Keratinocyte (primary cell): ENCODE measurements at regions of chr17 and their contacts with region 1.

Region 1: GRCh38 chr17:4304417-4305027 is 40.7 kb upstream of the ANKFY1 start:
- DNase-seq: no peak
- H3K4me3 ChIP-seq: no peak overlapping the region
- H3K27ac ChIP-seq: no peak overlapping the region
- H3K4me1 ChIP-seq: no peaks in the 10 kb centered on the region
- H3K27me3 ChIP-seq: no peaks in the 10 kb centered on the region
- CTCF ChIP-seq: peak in 2 of 3 experiments; percentile 60 to 62

Region 2: DNA sequence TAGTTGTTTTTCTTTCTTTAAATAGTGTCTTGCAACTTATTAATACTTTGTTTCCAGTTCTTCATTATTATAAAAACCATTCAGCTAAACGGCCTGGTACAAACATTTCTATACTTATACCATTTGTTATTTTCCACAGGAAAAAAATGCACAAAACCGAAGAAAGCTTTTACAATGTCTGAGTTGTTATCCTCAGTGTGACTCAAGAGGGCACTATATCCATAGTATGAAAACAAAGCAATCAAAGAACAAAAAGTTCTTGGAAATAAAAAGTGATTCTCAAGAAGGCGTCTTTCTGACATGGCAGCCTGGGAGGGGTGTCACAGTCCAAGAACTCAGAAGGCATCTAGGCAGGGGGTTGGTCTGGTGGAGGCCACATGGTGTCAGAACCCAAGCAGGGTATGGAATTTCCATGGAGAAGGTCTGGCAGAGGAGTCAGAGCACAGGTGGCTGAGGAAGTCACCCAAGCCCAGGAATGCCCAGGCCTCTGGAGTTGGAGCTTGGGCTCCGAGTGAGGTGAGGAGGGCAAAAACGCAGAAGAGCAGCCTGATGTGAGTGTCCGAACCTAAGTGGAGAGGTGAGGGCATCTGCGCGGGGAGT is 269.3 kb before region 1 on chr17:
- dilution Hi-C with region 1: no loop called
- DNase-seq: no peak
- H3K4me3 ChIP-seq: no peak overlapping the region
- H3K27ac ChIP-seq: no peak overlapping the region
- H3K4me1 ChIP-seq: no peaks in the 10 kb centered on the region
- H3K27me3 ChIP-seq: no peaks in the 10 kb centered on the region
- CTCF ChIP-seq: no peak

Region 3: GRCh38 chr17:4161179-4161559 is 143.4 kb before region 1 on chr17:
- dilution Hi-C with region 1: no loop called
- DNase-seq: peak; percentile 42
- H3K4me3 ChIP-seq: no peak overlapping the region
- H3K27ac ChIP-seq: peak overlapping the region; percentile 69
- H3K4me1 ChIP-seq: peaks cover 55% of the 10 kb centered on the region
- H3K27me3 ChIP-seq: no peaks in the 10 kb centered on the region
- CTCF ChIP-seq: peak; percentile 9 to 52 (median 49)

Region 4: DNA sequence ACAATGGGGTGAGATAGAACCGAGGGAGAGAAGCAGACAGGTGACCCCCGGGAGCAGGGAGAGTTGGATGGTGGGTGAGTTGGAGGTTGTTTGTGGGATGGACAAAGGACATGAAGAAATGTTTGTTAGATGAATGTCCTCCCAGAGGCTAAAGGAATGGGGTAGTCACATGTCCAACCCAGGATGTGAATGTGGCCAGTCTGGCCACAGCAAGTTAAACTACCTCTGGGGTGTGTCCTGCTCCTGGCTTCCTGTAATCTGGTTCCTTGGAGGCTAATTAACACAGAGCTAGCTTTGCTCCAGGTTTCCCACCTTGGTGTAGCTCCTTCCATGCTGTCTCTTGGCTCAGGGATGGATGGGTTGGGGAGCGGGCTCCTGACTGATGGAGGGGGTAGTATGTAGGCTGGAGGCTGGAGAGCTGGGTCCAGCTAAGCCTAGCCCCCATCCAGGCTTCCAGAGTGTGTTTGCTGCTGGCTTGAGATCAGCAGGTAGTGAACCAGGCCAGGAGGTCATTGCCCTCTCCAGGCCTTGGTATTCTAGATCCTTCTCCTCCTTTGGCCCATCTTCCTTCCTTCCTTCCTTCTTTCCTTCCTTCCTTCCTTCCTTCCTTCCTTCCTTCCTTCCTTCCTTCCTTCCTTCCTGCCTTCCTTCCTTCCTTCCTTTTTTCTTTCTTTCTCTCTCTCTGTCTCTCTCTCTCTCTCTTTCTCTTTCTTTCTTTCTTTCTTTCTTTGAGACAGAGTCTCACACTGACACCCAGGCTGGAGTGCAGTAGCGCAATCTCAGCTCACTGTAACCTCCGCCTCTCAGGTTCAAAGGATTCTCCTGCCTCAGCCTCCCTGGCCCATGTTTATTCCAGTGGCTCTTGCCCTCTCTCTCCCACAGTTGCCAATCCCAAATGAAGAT is 89.9 kb after region 1 on chr17:
- dilution Hi-C with region 1: no loop called
- DNase-seq: peak; percentile 83
- H3K4me3 ChIP-seq: peak overlapping the region in 2 of 3 experiments; percentile 58 to 62
- H3K27ac ChIP-seq: peak overlapping the region; percentile 85
- H3K4me1 ChIP-seq: peaks cover 46% of the 10 kb centered on the region
- H3K27me3 ChIP-seq: no peaks in the 10 kb centered on the region
- CTCF ChIP-seq: no peak

Region 5: GRCh38 chr17:4412933-4413831 is 108.7 kb after region 1 on chr17:
- dilution Hi-C with region 1: loop called (anchors 25 kb)
- DNase-seq: peak; percentile 67
- H3K4me3 ChIP-seq: peak overlapping the region in 1 of 3 experiments; percentile 19
- H3K27ac ChIP-seq: no peak overlapping the region
- H3K4me1 ChIP-seq: peaks cover 13% of the 10 kb centered on the region
- H3K27me3 ChIP-seq: no peaks in the 10 kb centered on the region
- CTCF ChIP-seq: peak; percentile 80 to 96 (median 96)

Region 6: GRCh38 chr17:4498461-4499397 is 194.2 kb after region 1 on chr17 and contains the start of gene SPNS2:
- dilution Hi-C with region 1: no loop called
- DNase-seq: no peak
- H3K4me3 ChIP-seq: peak within 1 kb of the TSS; percentile 18 to 43 (median 35)
- H3K27ac ChIP-seq: no peak within 1 kb of the TSS
- H3K4me1 ChIP-seq: peaks cover 16% of the 10 kb centered on the region
- H3K27me3 ChIP-seq: peaks cover 51% of the 10 kb centered on the region
- CTCF ChIP-seq: no peak
- polyA plus RNA-seq, gene SPNS2: 0.04 to 0.33 TPM (median 0.10 TPM) in 3 replicates